Heart left ventricle (tissue), 16 donors: ENCODE measurements at regions of chr2 and their contacts with region 1.

Region 1: DNA sequence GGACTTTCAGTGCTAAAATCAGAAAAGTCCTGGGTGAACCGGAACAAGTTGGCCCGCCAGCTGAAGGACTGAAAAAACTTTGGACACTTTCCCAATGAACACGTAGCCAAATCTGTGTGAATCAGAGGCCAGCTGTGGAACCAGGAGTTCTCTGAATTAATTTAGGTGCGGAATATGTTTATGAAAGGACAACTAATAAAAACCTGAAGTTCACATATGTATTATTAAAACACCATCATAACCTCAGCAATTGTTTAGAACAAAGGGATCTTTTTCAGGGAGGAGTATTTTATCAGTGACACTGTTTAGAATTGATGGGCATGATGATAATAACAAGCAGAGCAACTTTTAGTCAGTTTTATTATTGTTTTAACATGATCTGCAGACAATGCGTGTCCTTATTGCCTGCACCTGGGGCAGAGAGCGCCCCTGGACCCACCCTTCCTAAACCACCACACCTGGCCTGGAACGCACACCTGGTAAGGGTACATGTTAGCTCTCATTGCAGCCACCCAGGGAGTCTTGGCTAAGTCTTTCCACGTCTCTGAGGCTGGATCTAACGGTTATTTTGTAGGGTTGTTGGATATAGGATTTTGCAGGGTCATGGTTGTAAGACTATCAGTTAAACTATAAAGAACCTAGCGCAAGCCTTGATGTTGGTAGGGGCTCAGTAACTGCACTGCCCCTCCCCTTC is 9.9 kb upstream of the ODC1 start:
- DNase-seq: no peak
- ATAC-seq: peak in 1 of 4 donors; percentile 21
- H3K4me3 ChIP-seq: no peak overlapping the region
- H3K27ac ChIP-seq: no peak overlapping the region
- H3K4me1 ChIP-seq: peaks cover 0 to 15% (median 5%) of the 10 kb centered on the region in 12 donors
- H3K27me3 ChIP-seq: no peaks in the 10 kb centered on the region
- CTCF ChIP-seq: no peak
- POLR2A ChIP-seq: no peak

Region 2: DNA sequence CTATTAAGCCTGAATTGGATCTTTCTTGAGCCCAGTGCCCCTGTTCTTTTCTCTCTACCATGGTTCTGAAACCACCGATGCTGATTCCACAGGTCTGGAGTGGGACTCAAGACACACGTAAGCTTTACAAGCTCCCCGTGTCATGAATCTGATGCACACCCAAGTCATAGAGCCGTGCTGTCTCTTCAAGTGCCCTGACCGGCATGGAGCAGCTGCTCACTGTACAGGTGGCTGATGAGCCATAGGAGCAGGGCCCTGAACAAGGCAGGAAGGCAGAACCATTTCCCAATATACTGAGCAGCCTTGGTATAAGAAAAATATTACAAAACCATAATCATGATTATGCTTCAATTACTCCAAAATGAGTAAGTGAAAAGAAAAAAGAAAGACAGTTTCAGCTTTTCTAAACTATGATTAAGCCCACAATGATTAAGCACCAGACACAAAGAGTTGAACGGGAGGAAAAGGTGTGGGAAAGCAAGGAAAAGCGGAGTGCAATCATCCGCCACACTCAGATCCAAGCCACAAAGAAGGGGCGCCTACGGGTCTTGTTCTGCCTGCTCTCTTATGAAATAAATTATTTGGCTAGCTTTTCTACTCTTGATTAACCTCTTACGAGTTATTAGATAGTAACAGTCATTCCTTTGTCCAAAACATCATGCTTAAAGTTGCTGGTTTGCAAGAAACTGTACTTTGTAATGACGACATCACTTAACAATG is 190.0 kb after region 1 on chr2:
- intact Hi-C with region 1: loop called in 1 of 10 experiments (anchors 10 kb)
- DNase-seq: no peak
- ATAC-seq: peak; percentile 43 to 65 (median 63)
- H3K4me3 ChIP-seq: no peak overlapping the region
- H3K27ac ChIP-seq: peak overlapping the region in 5 of 12 donors; percentile 13 to 75 (median 49)
- H3K4me1 ChIP-seq: peaks cover 0 to 8% (median 0%) of the 10 kb centered on the region in 12 donors
- H3K27me3 ChIP-seq: no peaks in the 10 kb centered on the region
- CTCF ChIP-seq: no peak
- POLR2A ChIP-seq: no peak